B cell (primary cell): ENCODE measurements at regions of chr3 and their contacts with region 1.

Region 1: DNA sequence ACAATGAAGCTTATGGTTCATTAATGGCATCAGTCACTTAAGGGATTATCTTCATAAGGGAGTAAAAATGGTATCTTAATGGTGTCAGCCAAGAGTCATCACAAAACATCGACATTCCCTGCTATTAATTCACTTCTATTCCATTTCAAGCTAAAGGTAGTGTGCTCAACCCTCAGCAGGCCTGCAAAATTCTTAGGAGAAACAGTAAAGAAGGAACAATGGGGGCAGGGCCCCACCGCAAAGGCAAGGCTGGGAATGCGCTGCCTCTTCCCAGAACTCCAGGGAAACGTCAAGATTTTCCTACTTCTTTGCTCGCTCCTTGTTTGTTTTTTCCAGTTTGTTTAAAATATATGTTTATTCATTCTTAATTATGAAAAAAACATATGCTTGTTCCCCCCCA is 187.3 kb upstream of the TSC22D2 start:
- DNase-seq: no peak
- ATAC-seq: no peak
- H3K4me3 ChIP-seq: no peak overlapping the region
- H3K4me3 Mint-ChIP-seq: no peak overlapping the region
- H3K27ac ChIP-seq: no peak overlapping the region
- H3K27ac Mint-ChIP-seq: no peak overlapping the region
- H3K4me1 ChIP-seq: peaks cover 10 to 13% of the 10 kb centered on the region in 2 donors
- H3K4me1 Mint-ChIP-seq: peaks cover 10% of the 10 kb centered on the region
- H3K27me3 ChIP-seq: peaks cover 0 to 31% (median 13%) of the 10 kb centered on the region in 4 experiments
- H3K27me3 Mint-ChIP-seq: peaks cover 58% of the 10 kb centered on the region
- CTCF ChIP-seq: no peak

Region 2: DNA sequence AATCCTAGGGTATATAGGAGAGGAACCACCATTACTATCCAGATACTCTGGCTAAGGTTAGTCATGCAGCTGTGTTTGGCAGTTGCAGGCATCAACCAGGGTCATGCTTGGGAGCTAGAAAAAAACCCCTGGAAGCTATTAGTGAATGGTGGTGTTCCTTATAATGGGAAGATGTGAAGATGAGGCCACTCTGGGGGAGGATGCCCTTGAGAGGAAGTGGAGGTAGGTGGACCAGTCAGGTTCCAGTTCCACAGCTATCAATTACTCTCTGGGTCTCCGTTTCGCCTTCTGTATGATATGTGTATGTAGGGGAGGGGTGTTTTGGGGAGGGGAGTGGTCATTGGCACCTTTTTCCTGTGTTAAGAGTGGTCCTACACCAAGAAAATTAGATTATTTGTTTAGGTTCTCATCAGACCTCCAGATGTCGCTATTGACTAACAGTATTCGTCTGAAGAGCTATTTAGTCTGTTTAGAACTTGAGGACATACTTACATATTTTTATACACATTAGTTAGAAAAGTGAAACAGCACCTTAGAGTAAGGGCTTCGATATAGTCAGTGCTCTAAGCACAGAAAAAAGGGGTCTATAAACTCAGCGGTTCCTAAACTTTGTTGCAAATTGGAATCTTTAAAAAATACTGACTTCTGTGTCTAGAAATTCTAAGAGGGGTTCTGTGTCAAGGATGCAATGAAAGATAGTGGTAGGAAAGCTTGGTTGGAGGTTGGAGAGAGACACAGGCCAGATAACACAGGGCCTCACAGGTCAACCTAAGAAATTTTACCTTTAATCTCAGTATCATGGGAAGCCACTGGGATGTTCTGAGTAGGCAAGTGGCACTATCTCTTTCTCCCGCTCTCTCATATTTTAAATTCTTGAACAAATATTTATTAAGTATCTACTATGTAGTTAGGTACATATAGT is 1100.5 kb before region 1 on chr3:
- CTCF ChIA-PET with region 1: no interaction called
- POLR2A ChIA-PET with region 1: no interaction called
- intact Hi-C with region 1: no loop called
- DNase-seq: peak; percentile 80
- ATAC-seq: peak; percentile 96
- H3K4me3 ChIP-seq: no peak overlapping the region
- H3K4me3 Mint-ChIP-seq: no peak overlapping the region
- H3K27ac ChIP-seq: no peak overlapping the region
- H3K27ac Mint-ChIP-seq: no peak overlapping the region
- H3K4me1 ChIP-seq: peaks cover 0 to 5% of the 10 kb centered on the region in 2 donors
- H3K4me1 Mint-ChIP-seq: peaks cover 4% of the 10 kb centered on the region
- H3K27me3 ChIP-seq: no peaks in the 10 kb centered on the region
- H3K27me3 Mint-ChIP-seq: no peaks in the 10 kb centered on the region
- CTCF ChIP-seq: peak; percentile 83

Region 3: GRCh38 chr3:149393345-149394160 is 827.2 kb before region 1 on chr3:
- CTCF ChIA-PET with region 1: no interaction called
- POLR2A ChIA-PET with region 1: no interaction called
- intact Hi-C with region 1: no loop called
- DNase-seq: peak; percentile 19
- ATAC-seq: no peak
- H3K4me3 ChIP-seq: no peak overlapping the region
- H3K4me3 Mint-ChIP-seq: no peak overlapping the region
- H3K27ac ChIP-seq: no peak overlapping the region
- H3K27ac Mint-ChIP-seq: no peak overlapping the region
- H3K4me1 ChIP-seq: no peaks in the 10 kb centered on the region
- H3K4me1 Mint-ChIP-seq: no peaks in the 10 kb centered on the region
- H3K27me3 ChIP-seq: no peaks in the 10 kb centered on the region
- H3K27me3 Mint-ChIP-seq: no peaks in the 10 kb centered on the region
- CTCF ChIP-seq: peak; percentile 24

Region 4: GRCh38 chr3:149512209-149512782 is 708.5 kb before region 1 on chr3:
- CTCF ChIA-PET with region 1: no interaction called
- POLR2A ChIA-PET with region 1: no interaction called
- intact Hi-C with region 1: loop called (anchors 5 kb)
- DNase-seq: peak; percentile 37
- ATAC-seq: peak; percentile 21
- H3K4me3 ChIP-seq: no peak overlapping the region
- H3K4me3 Mint-ChIP-seq: no peak overlapping the region
- H3K27ac ChIP-seq: no peak overlapping the region
- H3K27ac Mint-ChIP-seq: no peak overlapping the region
- H3K4me1 ChIP-seq: peaks cover 5 to 11% of the 10 kb centered on the region in 2 donors
- H3K4me1 Mint-ChIP-seq: peaks cover 14% of the 10 kb centered on the region
- H3K27me3 ChIP-seq: peaks cover 0 to under 1% (median 0%) of the 10 kb centered on the region in 4 experiments
- H3K27me3 Mint-ChIP-seq: peaks cover 16% of the 10 kb centered on the region
- CTCF ChIP-seq: peak; percentile 50

Region 5: DNA sequence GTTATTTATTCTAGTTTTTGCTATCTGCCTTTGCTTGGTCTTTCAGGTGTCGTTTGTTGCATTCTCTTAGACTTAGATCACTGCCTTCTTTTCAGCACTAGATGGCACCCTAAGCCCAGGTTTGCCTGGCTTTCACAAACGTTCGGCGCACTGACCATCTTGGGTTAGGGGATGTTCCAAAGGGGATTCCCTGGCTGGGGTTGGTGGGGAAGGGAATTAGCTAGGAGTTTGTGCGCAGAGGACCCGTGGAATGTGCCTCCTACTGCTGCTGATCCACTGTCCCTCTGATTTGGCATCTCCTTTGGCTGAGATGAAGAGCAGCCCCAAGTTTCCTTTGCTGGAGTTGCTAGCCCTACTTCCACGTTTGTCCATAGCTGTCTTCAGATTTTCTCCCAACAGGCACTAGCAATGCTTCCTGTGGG is 284.0 kb before region 1 on chr3:
- CTCF ChIA-PET with region 1: interaction called, 16 read pairs
- POLR2A ChIA-PET with region 1: no interaction called
- intact Hi-C with region 1: loop called (anchors 1 kb)
- DNase-seq: peak; percentile 54
- ATAC-seq: no peak
- H3K4me3 ChIP-seq: no peak overlapping the region
- H3K4me3 Mint-ChIP-seq: no peak overlapping the region
- H3K27ac ChIP-seq: no peak overlapping the region
- H3K27ac Mint-ChIP-seq: no peak overlapping the region
- H3K4me1 ChIP-seq: no peaks in the 10 kb centered on the region
- H3K4me1 Mint-ChIP-seq: peaks cover 12% of the 10 kb centered on the region
- H3K27me3 ChIP-seq: no peaks in the 10 kb centered on the region
- H3K27me3 Mint-ChIP-seq: no peaks in the 10 kb centered on the region
- CTCF ChIP-seq: peak; percentile 74